ENCODE measurements at regions of chr22 and their contacts with region 1.

Region 1: DNA sequence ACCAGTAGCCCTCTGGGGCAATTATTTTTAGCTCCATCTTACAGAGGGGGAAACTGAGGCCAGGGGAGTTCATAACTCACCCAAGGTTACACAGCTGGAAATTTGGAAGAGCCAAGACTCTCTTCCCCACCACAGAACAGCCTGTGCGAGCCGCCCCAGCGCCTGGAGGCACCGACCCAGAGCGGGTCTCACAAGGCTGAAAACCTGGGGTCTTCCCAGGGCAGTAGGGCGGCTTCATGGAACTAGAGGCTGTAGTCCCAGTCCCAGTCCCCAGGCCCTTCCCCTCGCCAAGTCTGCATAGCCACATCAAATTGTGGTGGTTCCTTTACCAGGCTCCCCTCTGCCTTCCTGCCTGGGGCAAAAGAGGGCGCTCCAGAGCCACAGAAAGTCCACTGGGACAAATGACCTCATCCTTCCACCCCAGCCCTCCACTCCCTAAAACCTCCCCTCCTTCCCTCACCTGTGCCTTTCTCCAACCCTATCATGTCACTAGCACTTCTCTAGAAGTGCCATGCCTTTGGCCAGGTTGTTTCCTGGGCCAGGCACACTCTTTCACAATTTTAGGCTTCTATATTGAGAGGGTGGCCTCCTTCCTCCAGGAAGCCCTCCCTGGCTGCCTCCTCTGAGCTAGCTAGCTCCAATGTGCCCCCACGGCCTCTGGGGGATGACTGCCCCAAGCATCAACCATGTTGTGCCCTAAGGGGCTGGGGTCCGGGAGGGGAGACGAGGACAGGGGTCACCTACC is 15.2 kb upstream of the CDC42EP1 start:
- DNase-seq: peak; percentile 58
- ATAC-seq: peak; percentile 40
- H3K4me3 ChIP-seq: no peak overlapping the region
- H3K27ac ChIP-seq: peak overlapping the region; percentile 89
- H3K4me1 ChIP-seq: peaks cover 30% of the 10 kb centered on the region
- H3K27me3 ChIP-seq: no peaks in the 10 kb centered on the region
- CTCF ChIP-seq: peak; percentile 88
- POLR2A ChIP-seq: no peak
- RAD21 ChIP-seq: peak; percentile 83

Region 2: GRCh38 chr22:37561212-37562048 is 16.3 kb after region 1 on chr22:
- CTCF ChIA-PET with region 1: interaction called, 7 read pairs
- POLR2A ChIA-PET with region 1: interaction called, 7 read pairs
- dilution Hi-C with region 1: no loop called
- in situ Hi-C with region 1: no loop called
- intact Hi-C with region 1: loop called (anchors 1 kb)
- DNase-seq: peak; percentile 86
- ATAC-seq: peak; percentile 32
- H3K4me3 ChIP-seq: peak overlapping the region; percentile 82
- H3K27ac ChIP-seq: peak overlapping the region; percentile 100
- H3K4me1 ChIP-seq: peaks cover 29% of the 10 kb centered on the region
- H3K27me3 ChIP-seq: no peaks in the 10 kb centered on the region
- CTCF ChIP-seq: peak; percentile 92
- POLR2A ChIP-seq: no peak; the same call in 1 of the 2 replicates
- RAD21 ChIP-seq: peak; percentile 50

Region 3: GRCh38 chr22:37566903-37567820 is 22.0 kb after region 1 on chr22:
- CTCF ChIA-PET with region 1: interaction called, 11 read pairs
- POLR2A ChIA-PET with region 1: interaction called, 7 read pairs
- dilution Hi-C with region 1: no loop called
- in situ Hi-C with region 1: no loop called
- intact Hi-C with region 1: no loop called
- DNase-seq: peak; percentile 46
- ATAC-seq: no peak
- H3K4me3 ChIP-seq: no peak overlapping the region
- H3K27ac ChIP-seq: no peak overlapping the region
- H3K4me1 ChIP-seq: peaks cover 23% of the 10 kb centered on the region
- H3K27me3 ChIP-seq: no peaks in the 10 kb centered on the region
- CTCF ChIP-seq: peak; percentile 80
- POLR2A ChIP-seq: 0 out of 2 replicates have a peak, but pooled peaks have one; percentile 21
- RAD21 ChIP-seq: peak; percentile 84

Region 4: DNA sequence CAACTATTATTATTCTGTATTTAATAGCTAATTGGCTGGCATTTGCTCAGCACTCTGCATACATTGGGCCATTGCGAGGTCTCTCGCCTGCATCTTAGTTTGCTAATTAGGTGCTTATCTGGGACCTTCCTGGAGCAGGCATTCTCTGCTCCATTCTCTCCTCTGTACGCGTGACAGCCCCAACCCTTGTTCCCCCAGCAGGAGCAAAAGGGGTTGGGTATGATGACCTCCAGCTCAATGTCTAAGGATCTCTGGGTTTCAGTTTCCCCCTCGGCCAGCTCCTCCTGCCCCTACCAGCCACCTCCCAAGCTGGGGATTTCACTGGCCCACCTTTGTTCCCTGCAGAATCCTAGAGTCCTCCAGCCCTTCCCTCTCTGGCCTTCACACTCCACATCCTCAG is 44.5 kb after region 1 on chr22:
- CTCF ChIA-PET with region 1: interaction called, 28 read pairs
- POLR2A ChIA-PET with region 1: interaction called, 4 read pairs
- dilution Hi-C with region 1: no loop called
- in situ Hi-C with region 1: no loop called
- intact Hi-C with region 1: loop called (anchors 1 kb)
- DNase-seq: no peak
- ATAC-seq: no peak
- H3K4me3 ChIP-seq: no peak overlapping the region
- H3K27ac ChIP-seq: no peak overlapping the region
- H3K4me1 ChIP-seq: no peaks in the 10 kb centered on the region; the same call in 1 of the 2 replicates
- H3K27me3 ChIP-seq: peaks cover 17% of the 10 kb centered on the region
- CTCF ChIP-seq: no peak
- POLR2A ChIP-seq: no peak
- RAD21 ChIP-seq: no peak

Region 5: DNA sequence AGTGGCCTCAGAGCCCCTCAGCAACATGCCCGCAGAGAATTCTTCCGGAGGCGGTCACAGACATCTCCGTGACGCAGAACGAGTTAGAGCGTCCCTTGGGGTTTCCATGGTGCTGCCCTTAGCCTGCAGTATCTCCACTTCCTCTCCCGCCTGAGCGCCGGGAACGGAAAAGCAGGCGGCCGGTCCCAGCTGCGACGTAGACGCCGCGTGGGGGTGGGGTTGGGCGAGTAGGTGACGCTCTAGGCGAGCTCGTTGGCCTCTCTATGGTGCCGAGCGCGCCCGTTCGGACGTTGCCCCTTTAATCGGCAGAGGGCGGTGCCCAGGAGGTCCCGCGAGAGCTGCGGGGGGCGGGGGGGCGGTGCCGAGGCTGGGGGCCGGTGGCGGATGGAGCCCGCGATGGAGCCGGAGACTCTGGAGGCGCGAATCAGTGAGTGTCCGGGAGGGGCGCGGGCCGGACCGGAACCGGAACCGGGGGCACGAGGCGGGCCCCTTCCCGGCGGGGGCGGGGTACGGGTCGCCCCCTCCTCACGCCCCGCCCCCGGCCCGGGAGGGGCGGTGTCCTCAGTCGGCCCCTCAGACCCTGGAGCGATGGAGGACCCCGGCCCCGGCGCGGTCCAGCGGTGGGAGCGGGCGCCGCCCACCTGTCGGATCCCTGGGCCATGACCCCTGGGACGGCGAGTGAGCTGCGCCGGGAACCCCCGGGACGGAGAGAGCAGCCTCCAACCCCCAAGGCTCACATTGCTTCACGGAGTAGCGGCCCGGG is 63.5 kb after region 1 on chr22 and contains the start of gene GGA1:
- CTCF ChIA-PET with region 1: interaction called, 3 read pairs
- POLR2A ChIA-PET with region 1: no interaction called
- dilution Hi-C with region 1: no loop called
- in situ Hi-C with region 1: no loop called
- intact Hi-C with region 1: loop called (anchors 5 kb)
- DNase-seq: peak; percentile 97
- ATAC-seq: peak; percentile 91
- H3K4me3 ChIP-seq: peak within 1 kb of the TSS; percentile 56
- H3K27ac ChIP-seq: peak within 1 kb of the TSS; percentile 96
- H3K4me1 ChIP-seq: peaks cover 12% of the 10 kb centered on the region
- H3K27me3 ChIP-seq: peaks cover 7% of the 10 kb centered on the region
- CTCF ChIP-seq: 0 out of 2 replicates have a peak, but pooled peaks have one; percentile 5
- POLR2A ChIP-seq: peak; percentile 78
- RAD21 ChIP-seq: no peak
- total RNA-seq, gene GGA1: 17.2 and 19.7 TPM in 2 replicates

Region 6: GRCh38 chr22:37633625-37634416 is 88.7 kb after region 1 on chr22:
- CTCF ChIA-PET with region 1: no interaction called
- POLR2A ChIA-PET with region 1: no interaction called
- dilution Hi-C with region 1: no loop called
- in situ Hi-C with region 1: no loop called
- intact Hi-C with region 1: no loop called
- DNase-seq: peak; percentile 92
- ATAC-seq: peak; percentile 81
- H3K4me3 ChIP-seq: no peak overlapping the region
- H3K27ac ChIP-seq: peak overlapping the region; percentile 97
- H3K4me1 ChIP-seq: peaks cover 37% of the 10 kb centered on the region
- H3K27me3 ChIP-seq: no peaks in the 10 kb centered on the region
- CTCF ChIP-seq: peak; percentile 28
- POLR2A ChIP-seq: no peak; the same call in 1 of the 2 replicates
- RAD21 ChIP-seq: no peak

Region 7: GRCh38 chr22:37716708-37717107 is 171.6 kb after region 1 on chr22:
- CTCF ChIA-PET with region 1: no interaction called
- POLR2A ChIA-PET with region 1: no interaction called
- dilution Hi-C with region 1: no loop called
- in situ Hi-C with region 1: no loop called
- intact Hi-C with region 1: no loop called
- DNase-seq: peak; percentile 33
- ATAC-seq: no peak
- H3K4me3 ChIP-seq: no peak overlapping the region
- H3K27ac ChIP-seq: no peak overlapping the region
- H3K4me1 ChIP-seq: no peaks in the 10 kb centered on the region
- H3K27me3 ChIP-seq: no peaks in the 10 kb centered on the region
- CTCF ChIP-seq: no peak
- POLR2A ChIP-seq: no peak
- RAD21 ChIP-seq: no peak

Measured in IMR-90 (cell line).